IMR-90 (cell line): ENCODE measurements at regions of chr9 and their contacts with region 1.

Region 1: DNA sequence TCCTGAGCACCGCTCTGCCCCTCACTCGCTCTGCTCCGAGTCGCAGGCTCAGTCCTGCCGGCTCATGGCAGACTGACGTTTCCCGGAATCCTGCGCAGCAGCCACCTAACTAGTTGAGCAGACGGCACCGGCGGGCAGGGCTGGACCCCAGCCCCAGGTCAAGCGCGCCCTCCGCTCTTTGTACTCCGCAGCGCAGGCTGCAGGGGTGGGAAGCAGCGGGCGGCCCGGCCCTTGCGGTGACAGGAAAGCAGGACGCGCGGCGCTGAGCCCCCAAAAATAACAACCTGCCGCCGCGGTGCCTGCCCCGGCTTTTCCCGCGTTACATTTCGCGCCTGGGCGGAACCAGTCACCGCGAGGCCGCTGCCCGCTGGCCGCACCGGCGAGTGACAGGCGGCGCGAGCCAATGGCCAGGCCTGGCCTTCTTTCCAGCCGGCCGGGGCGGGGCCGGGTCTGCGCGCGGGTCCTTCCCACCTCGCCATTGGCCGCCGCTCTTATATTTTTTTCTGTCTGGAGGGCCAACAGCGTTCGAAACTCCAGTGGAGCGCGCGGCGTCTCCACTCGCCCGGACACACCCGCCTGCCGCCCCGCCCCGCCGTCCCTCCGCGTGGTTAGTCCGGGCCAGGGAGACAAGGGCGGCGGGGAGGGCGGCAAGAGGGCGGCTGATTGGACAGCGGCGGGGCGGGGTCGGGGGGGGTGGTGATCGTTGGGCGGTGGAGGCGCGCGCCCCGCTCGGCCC is at the start of gene ZNF367:
- DNase-seq: peak; percentile 95
- ATAC-seq: peak; percentile 86
- H3K4me3 ChIP-seq: peak within 1 kb of the TSS; percentile 85
- H3K27ac ChIP-seq: peak within 1 kb of the TSS; percentile 83
- H3K4me1 ChIP-seq: peaks cover 7% of the 10 kb centered on the region
- H3K27me3 ChIP-seq: no peaks in the 10 kb centered on the region
- CTCF ChIP-seq: no peak
- POLR2A ChIP-seq: no peak
- RAD21 ChIP-seq: no peak
- total RNA-seq, gene ZNF367: 2.7 and 4.7 TPM in 2 replicates

Region 2: GRCh38 chr9:96344458-96345180 is 73.6 kb before region 1 on chr9:
- CTCF ChIA-PET with region 1: no interaction called
- POLR2A ChIA-PET with region 1: no interaction called
- dilution Hi-C with region 1: no loop called
- in situ Hi-C with region 1: no loop called
- intact Hi-C with region 1: loop called (anchors 5 kb)
- DNase-seq: peak; percentile 95
- ATAC-seq: peak; percentile 77
- H3K4me3 ChIP-seq: no peak overlapping the region
- H3K27ac ChIP-seq: peak overlapping the region; percentile 63; the same call in 1 of the 2 replicates
- H3K4me1 ChIP-seq: peaks cover 8% of the 10 kb centered on the region
- H3K27me3 ChIP-seq: no peaks in the 10 kb centered on the region
- CTCF ChIP-seq: no peak
- POLR2A ChIP-seq: no peak
- RAD21 ChIP-seq: no peak

Region 3: DNA sequence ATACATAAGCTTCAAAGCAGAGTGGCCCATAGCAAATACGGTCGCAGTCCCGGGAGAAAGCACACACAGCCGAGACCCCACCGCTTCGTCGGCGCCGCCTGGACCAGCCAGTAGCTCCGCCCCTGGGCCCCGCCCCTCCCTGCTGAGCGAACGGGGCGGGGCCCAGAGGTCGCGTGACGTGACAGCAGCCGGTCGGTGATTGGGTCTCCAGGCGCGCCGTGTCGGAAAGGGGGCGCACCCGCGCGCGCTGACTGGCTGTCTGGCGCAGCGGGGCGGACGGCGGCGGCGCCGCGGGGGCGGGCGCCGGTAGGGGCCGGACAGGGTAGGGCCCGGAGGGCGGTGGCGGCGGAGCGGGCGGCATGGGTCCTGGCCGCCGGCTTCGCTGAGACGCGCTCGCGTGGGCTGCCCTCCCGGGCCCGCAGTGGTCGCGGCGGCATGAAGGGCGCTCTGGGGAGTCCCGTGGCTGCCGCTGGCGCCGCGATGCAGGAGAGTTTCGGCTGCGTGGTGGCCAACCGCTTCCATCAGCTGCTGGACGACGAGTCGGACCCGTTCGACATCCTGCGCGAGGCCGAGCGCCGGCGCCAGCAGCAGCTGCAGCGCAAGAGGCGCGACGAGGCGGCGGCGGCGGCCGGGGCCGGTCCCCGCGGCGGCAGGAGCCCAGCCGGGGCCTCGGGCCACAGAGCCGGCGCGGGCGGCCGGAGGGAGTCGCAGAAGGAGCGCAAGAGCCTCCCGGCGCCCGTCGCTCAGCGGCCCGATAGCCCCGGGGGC is 31.8 kb after region 1 on chr9 and contains the start of gene HABP4:
- CTCF ChIA-PET with region 1: no interaction called
- POLR2A ChIA-PET with region 1: no interaction called
- dilution Hi-C with region 1: no loop called
- in situ Hi-C with region 1: no loop called
- intact Hi-C with region 1: loop called (anchors 2 kb)
- DNase-seq: peak; percentile 91
- ATAC-seq: peak; percentile 96
- H3K4me3 ChIP-seq: peak within 1 kb of the TSS; percentile 97
- H3K27ac ChIP-seq: peak within 1 kb of the TSS; percentile 74
- H3K4me1 ChIP-seq: peaks cover 5% of the 10 kb centered on the region; the same call in 1 of the 2 replicates
- H3K27me3 ChIP-seq: no peaks in the 10 kb centered on the region
- CTCF ChIP-seq: no peak
- POLR2A ChIP-seq: peak; percentile 76
- RAD21 ChIP-seq: no peak
- total RNA-seq, gene HABP4: 5.2 and 10.3 TPM in 2 replicates

Region 4: GRCh38 chr9:96540106-96540505 is 121.9 kb after region 1 on chr9:
- CTCF ChIA-PET with region 1: no interaction called
- POLR2A ChIA-PET with region 1: no interaction called
- dilution Hi-C with region 1: no loop called
- in situ Hi-C with region 1: no loop called
- intact Hi-C with region 1: no loop called
- DNase-seq: no peak
- ATAC-seq: no peak
- H3K4me3 ChIP-seq: no peak overlapping the region
- H3K27ac ChIP-seq: no peak overlapping the region
- H3K4me1 ChIP-seq: no peaks in the 10 kb centered on the region
- H3K27me3 ChIP-seq: no peaks in the 10 kb centered on the region
- CTCF ChIP-seq: no peak
- POLR2A ChIP-seq: no peak
- RAD21 ChIP-seq: no peak

Region 5: GRCh38 chr9:96566498-96567207 is 148.4 kb after region 1 on chr9:
- CTCF ChIA-PET with region 1: no interaction called
- POLR2A ChIA-PET with region 1: no interaction called
- dilution Hi-C with region 1: no loop called
- in situ Hi-C with region 1: no loop called
- intact Hi-C with region 1: loop called (anchors 5 kb)
- DNase-seq: no peak
- ATAC-seq: peak; percentile 86
- H3K4me3 ChIP-seq: peak overlapping the region; percentile 58
- H3K27ac ChIP-seq: peak overlapping the region; percentile 52
- H3K4me1 ChIP-seq: peaks cover 3% of the 10 kb centered on the region; the same call in 1 of the 2 replicates
- H3K27me3 ChIP-seq: no peaks in the 10 kb centered on the region
- CTCF ChIP-seq: peak; percentile 47
- POLR2A ChIP-seq: no peak
- RAD21 ChIP-seq: peak; percentile 34

Region 6: DNA sequence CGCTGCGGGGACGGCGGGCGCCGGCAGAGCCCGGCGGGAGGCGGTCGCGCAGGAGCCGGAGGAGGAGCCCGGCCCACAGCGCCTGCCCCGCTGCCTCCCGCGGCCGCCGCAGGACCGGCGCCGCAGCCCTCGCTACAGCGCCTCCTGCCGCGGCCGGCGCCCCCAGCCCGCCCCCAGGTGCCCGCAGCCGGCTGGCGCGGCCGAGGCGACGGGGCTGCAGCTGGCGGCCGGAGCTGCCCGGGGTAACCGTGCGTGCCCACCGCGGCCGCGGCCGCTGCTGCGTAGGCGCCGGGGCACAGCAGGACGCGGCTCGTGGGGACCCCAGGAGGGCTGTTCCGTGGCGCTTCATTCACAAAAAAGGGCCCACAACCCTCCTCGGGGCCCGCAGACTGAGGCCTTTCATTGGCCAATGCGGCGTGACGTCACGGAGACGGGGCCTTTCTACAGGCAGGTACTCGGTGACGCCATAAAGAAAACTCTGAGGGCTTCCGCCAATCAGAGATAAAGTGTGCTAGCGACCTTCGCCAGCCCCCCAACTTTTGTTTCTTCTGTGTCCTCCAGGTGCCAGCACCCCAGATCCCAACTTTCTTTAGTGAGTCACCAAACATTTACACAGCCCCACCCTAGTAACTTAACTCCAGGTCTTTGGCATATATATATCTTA is 201.4 kb after region 1 on chr9 and contains the start of gene CDC14B:
- CTCF ChIA-PET with region 1: no interaction called
- POLR2A ChIA-PET with region 1: no interaction called
- dilution Hi-C with region 1: no loop called
- in situ Hi-C with region 1: no loop called
- intact Hi-C with region 1: loop called (anchors 1 kb)
- DNase-seq: peak; percentile 90
- ATAC-seq: peak; percentile 92
- H3K4me3 ChIP-seq: peak within 1 kb of the TSS; percentile 88
- H3K27ac ChIP-seq: peak within 1 kb of the TSS; percentile 12; the same call in 1 of the 2 replicates
- H3K4me1 ChIP-seq: peaks cover 3% of the 10 kb centered on the region; the same call in 1 of the 2 replicates
- H3K27me3 ChIP-seq: no peaks in the 10 kb centered on the region
- CTCF ChIP-seq: peak; percentile 46
- POLR2A ChIP-seq: no peak
- RAD21 ChIP-seq: peak; percentile 42
- total RNA-seq, gene CDC14B: 24.7 and 26.3 TPM in 2 replicates

Region 7: GRCh38 chr9:97109194-97109811 is 691.1 kb after region 1 on chr9:
- CTCF ChIA-PET with region 1: no interaction called
- POLR2A ChIA-PET with region 1: no interaction called
- dilution Hi-C with region 1: no loop called
- in situ Hi-C with region 1: no loop called
- intact Hi-C with region 1: no loop called
- DNase-seq: peak; percentile 6
- ATAC-seq: peak; percentile 37; the same call in 1 of the 2 replicates
- H3K4me3 ChIP-seq: no peak overlapping the region
- H3K27ac ChIP-seq: no peak overlapping the region
- H3K4me1 ChIP-seq: no peaks in the 10 kb centered on the region
- H3K27me3 ChIP-seq: no peaks in the 10 kb centered on the region
- CTCF ChIP-seq: peak; percentile 31; the same call in 1 of the 2 replicates
- POLR2A ChIP-seq: no peak
- RAD21 ChIP-seq: peak; percentile 32